ENCODE measurements at regions of chr10 and their contacts with region 1.

Region 1: GRCh38 chr10:96089670-96090462 is 40.2 kb upstream of the ZNF518A start:
- H3K4me3 Mint-ChIP-seq: peak overlapping the region; percentile 81
- H3K27ac Mint-ChIP-seq: peak overlapping the region; percentile 98
- H3K4me1 Mint-ChIP-seq: no peaks in the 10 kb centered on the region
- H3K27me3 Mint-ChIP-seq: peaks cover 27% of the 10 kb centered on the region

Region 2: GRCh38 chr10:96129387-96130325 is 39.8 kb after region 1 on chr10 and contains the start of gene ZNF518A:
- intact Hi-C with region 1: loop called (anchors 1 kb)
- H3K4me3 Mint-ChIP-seq: peak within 1 kb of the TSS; percentile 87
- H3K27ac Mint-ChIP-seq: peak within 1 kb of the TSS; percentile 99
- H3K4me1 Mint-ChIP-seq: peaks cover 22% of the 10 kb centered on the region
- H3K27me3 Mint-ChIP-seq: peaks cover 17% of the 10 kb centered on the region

Measured in dendritic cell treated with granulocyte-macrophage colony-stimulating factor and Interleukin-4, amounts not matched to agents 40 ng/mL and 50 ng/mL, for 4 days (primary cell).